ENCODE measurements at regions of chr15 and their contacts with region 1.

Region 1: DNA sequence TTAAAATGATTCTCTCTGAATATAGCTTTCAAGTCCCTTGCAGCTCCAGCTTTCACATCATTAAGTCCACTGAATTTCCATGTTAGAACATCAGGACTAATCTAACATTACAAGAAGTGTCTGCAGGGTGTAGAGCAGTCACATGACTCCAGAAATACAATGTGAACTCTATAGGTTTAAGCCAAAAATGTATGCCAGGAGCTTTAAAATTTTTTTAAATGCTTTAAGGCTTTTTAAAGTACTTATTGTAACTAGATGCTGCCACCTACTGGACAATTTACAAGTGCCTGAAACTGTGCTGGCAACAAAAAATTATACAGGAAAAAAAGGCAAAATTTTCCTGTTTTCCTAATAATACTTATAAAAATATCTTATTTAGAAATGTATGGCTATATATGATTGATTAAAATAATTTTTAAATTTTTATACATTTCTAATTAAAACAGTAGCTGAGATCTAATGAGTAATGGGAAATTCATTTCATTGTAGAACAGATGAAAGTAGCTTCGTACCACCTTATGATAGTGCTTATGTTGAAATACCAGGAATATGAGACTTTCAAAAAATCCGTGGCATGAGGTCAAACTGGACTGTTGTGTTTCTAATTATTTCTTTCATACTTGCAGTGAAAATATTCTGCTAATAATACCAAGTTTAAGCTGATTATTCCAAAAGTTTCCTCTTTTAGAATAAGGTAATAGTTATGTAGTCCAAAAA is 25.7 kb downstream of the FSIP1 start:
- DNase-seq: peak; percentile 18
- H3K4me3 ChIP-seq: no peak overlapping the region
- H3K27ac ChIP-seq: no peak overlapping the region
- H3K4me1 ChIP-seq: no peaks in the 10 kb centered on the region
- H3K27me3 ChIP-seq: no peaks in the 10 kb centered on the region
- CTCF ChIP-seq: peak; percentile 64 to 65

Region 2: GRCh38 chr15:38354315-38354929 is 1402.5 kb before region 1 on chr15:
- CTCF ChIA-PET with region 1: interaction called, 10 read pairs
- dilution Hi-C with region 1: no loop called
- in situ Hi-C with region 1: no loop called
- intact Hi-C with region 1: no loop called
- DNase-seq: peak; percentile 34
- H3K4me3 ChIP-seq: no peak overlapping the region
- H3K27ac ChIP-seq: no peak overlapping the region
- H3K4me1 ChIP-seq: no peaks in the 10 kb centered on the region
- H3K27me3 ChIP-seq: no peaks in the 10 kb centered on the region
- CTCF ChIP-seq: peak; percentile 76 to 83

Region 3: GRCh38 chr15:38817427-38818156 is 939.4 kb before region 1 on chr15:
- CTCF ChIA-PET with region 1: no interaction called
- dilution Hi-C with region 1: no loop called
- in situ Hi-C with region 1: no loop called
- intact Hi-C with region 1: loop called (anchors 5 kb)
- DNase-seq: peak; percentile 81
- H3K4me3 ChIP-seq: no peak overlapping the region
- H3K27ac ChIP-seq: no peak overlapping the region
- H3K4me1 ChIP-seq: peaks cover 6% of the 10 kb centered on the region
- H3K27me3 ChIP-seq: no peaks in the 10 kb centered on the region
- CTCF ChIP-seq: peak; percentile 99 to 100

Region 4: GRCh38 chr15:39624806-39625205 is 132.2 kb before region 1 on chr15:
- CTCF ChIA-PET with region 1: interaction called, 4 read pairs
- dilution Hi-C with region 1: loop called (anchors 25 kb)
- in situ Hi-C with region 1: no loop called
- intact Hi-C with region 1: no loop called
- DNase-seq: peak; percentile 86
- H3K4me3 ChIP-seq: no peak overlapping the region
- H3K27ac ChIP-seq: peak overlapping the region; percentile 35
- H3K4me1 ChIP-seq: peaks cover 38% of the 10 kb centered on the region
- H3K27me3 ChIP-seq: no peaks in the 10 kb centered on the region
- CTCF ChIP-seq: peak in 1 of 2 donors; percentile 14

Region 5: DNA sequence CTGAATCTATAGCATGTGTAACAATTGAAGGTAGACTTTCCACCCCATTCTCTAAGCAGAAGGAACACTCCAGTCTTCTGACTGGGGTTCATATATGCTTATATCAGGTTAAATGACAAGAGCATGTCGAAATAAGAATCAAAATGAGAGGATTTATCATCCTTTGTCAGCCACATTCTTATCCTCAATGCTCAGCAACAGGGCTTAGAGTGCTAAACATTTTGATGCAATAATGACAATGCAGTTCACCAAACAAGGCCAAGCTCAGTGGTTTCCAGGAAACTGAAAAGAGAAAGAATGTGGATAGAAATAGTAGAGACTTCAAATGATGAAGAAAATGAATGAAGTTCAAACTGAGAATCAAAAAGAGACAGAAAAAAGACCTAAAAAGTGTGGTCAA is 52.3 kb before region 1 on chr15:
- CTCF ChIA-PET with region 1: no interaction called
- dilution Hi-C with region 1: loop called (anchors 5 kb)
- in situ Hi-C with region 1: no loop called
- intact Hi-C with region 1: no loop called
- DNase-seq: no peak
- H3K4me3 ChIP-seq: no peak overlapping the region
- H3K27ac ChIP-seq: no peak overlapping the region
- H3K4me1 ChIP-seq: no peaks in the 10 kb centered on the region
- H3K27me3 ChIP-seq: no peaks in the 10 kb centered on the region
- CTCF ChIP-seq: no peak

Region 6: GRCh38 chr15:39770748-39771689 is 14.1 kb after region 1 on chr15:
- CTCF ChIA-PET with region 1: no interaction called
- dilution Hi-C with region 1: no loop called
- in situ Hi-C with region 1: no loop called
- intact Hi-C with region 1: no loop called
- DNase-seq: peak; percentile 30
- H3K4me3 ChIP-seq: no peak overlapping the region
- H3K27ac ChIP-seq: no peak overlapping the region
- H3K4me1 ChIP-seq: no peaks in the 10 kb centered on the region
- H3K27me3 ChIP-seq: no peaks in the 10 kb centered on the region
- CTCF ChIP-seq: no peak

Measured in mammary epithelial cell (primary cell).